Caco-2 (cell line): ENCODE measurements at regions of chr6 and their contacts with region 1.

Region 1: GRCh38 chr6:80338201-80338836 is 231.8 kb downstream of the BCKDHB start:
- DNase-seq: peak; percentile 69 to 82
- H3K4me3 ChIP-seq: no peak overlapping the region
- H3K4me3 Mint-ChIP-seq: no peak overlapping the region
- H3K27ac Mint-ChIP-seq: no peak overlapping the region
- H3K4me1 ChIP-seq: 0 out of 2 replicates have a peak, but pooled peaks cover 4% of the 10 kb centered on the region
- H3K4me1 Mint-ChIP-seq: no peaks in the 10 kb centered on the region
- H3K27me3 ChIP-seq: no peaks in the 10 kb centered on the region
- H3K27me3 Mint-ChIP-seq: no peaks in the 10 kb centered on the region
- CTCF ChIP-seq: peak; percentile 68 to 86

Region 2: GRCh38 chr6:80133020-80133419 is 205.3 kb before region 1 on chr6:
- CTCF ChIA-PET with region 1: no interaction called
- POLR2A ChIA-PET with region 1: no interaction called
- intact Hi-C with region 1: loop called (anchors 10 kb)
- DNase-seq: peak in 1 of 2 experiments; percentile 12
- H3K4me3 ChIP-seq: no peak overlapping the region
- H3K4me3 Mint-ChIP-seq: no peak overlapping the region
- H3K27ac Mint-ChIP-seq: peak overlapping the region; percentile 20
- H3K4me1 ChIP-seq: peaks cover 8% of the 10 kb centered on the region
- H3K4me1 Mint-ChIP-seq: peaks cover 11% of the 10 kb centered on the region
- H3K27me3 ChIP-seq: no peaks in the 10 kb centered on the region
- H3K27me3 Mint-ChIP-seq: no peaks in the 10 kb centered on the region
- CTCF ChIP-seq: peak in 1 of 2 experiments; percentile 10

Region 3: DNA sequence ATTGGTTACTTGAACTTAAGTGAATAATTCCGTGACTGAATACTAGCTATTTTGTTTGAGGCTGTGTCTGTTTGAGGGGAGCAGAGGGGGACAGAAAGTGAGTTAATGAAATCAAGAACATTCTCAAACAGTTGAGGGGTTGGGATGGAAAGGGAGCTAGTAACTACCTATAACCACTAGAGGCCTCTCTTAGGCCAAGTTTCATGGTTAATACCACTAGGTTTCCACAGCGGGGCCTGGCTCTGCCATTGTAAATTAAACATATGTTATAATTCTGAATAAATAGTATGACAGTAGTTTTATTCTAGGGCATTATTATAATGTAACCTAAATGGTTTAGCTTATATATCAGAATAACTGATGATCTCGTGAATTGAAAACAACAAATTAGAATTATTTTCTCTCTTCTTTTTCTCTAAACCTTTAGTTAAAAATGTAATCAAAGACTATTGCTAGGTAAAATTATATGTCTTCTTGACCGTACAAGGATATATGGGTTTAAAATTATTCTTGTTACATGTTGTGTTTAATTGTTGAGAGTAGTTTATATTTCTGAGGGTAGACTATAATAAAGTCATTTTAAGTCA is 123.8 kb before region 1 on chr6:
- CTCF ChIA-PET with region 1: no interaction called
- POLR2A ChIA-PET with region 1: no interaction called
- intact Hi-C with region 1: loop called (anchors 2 kb)
- DNase-seq: peak in 1 of 2 experiments; percentile 33
- H3K4me3 ChIP-seq: no peak overlapping the region
- H3K4me3 Mint-ChIP-seq: no peak overlapping the region
- H3K27ac Mint-ChIP-seq: no peak overlapping the region
- H3K4me1 ChIP-seq: peaks cover 36% of the 10 kb centered on the region
- H3K4me1 Mint-ChIP-seq: peaks cover 25% of the 10 kb centered on the region
- H3K27me3 ChIP-seq: no peaks in the 10 kb centered on the region
- H3K27me3 Mint-ChIP-seq: no peaks in the 10 kb centered on the region
- CTCF ChIP-seq: peak; percentile 71 to 78

Region 4: DNA sequence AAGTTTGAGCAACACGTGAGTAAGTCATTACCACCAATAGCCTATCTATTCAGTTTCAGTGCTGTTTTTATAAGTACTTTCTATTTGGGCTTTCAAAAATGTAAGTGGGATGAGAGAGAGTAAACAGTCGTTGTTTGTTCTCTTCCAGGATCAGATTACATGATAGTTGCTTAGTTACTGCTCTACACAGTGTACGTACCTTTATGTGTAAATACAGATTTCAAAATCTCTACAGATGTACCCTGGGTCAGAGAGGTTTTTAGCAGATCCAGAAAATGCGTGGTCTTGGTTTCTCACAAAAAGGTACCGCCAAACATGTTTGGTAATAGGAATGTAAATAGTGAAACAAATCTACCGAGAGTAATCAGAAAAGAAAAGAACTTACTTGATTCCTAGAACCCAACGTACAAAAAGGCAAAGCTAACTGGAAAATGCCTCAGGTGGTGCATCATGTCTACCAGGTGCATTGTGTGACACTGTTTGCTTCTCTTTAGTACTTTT is 189.3 kb after region 1 on chr6:
- CTCF ChIA-PET with region 1: no interaction called
- POLR2A ChIA-PET with region 1: no interaction called
- intact Hi-C with region 1: loop called (anchors 5 kb)
- DNase-seq: peak in 1 of 2 experiments; percentile 48
- H3K4me3 ChIP-seq: no peak overlapping the region
- H3K4me3 Mint-ChIP-seq: peak overlapping the region; percentile 4
- H3K27ac Mint-ChIP-seq: peak overlapping the region; percentile 8
- H3K4me1 ChIP-seq: peaks cover 19% of the 10 kb centered on the region
- H3K4me1 Mint-ChIP-seq: no peaks in the 10 kb centered on the region
- H3K27me3 ChIP-seq: no peaks in the 10 kb centered on the region
- H3K27me3 Mint-ChIP-seq: no peaks in the 10 kb centered on the region
- CTCF ChIP-seq: no peak

Region 5: DNA sequence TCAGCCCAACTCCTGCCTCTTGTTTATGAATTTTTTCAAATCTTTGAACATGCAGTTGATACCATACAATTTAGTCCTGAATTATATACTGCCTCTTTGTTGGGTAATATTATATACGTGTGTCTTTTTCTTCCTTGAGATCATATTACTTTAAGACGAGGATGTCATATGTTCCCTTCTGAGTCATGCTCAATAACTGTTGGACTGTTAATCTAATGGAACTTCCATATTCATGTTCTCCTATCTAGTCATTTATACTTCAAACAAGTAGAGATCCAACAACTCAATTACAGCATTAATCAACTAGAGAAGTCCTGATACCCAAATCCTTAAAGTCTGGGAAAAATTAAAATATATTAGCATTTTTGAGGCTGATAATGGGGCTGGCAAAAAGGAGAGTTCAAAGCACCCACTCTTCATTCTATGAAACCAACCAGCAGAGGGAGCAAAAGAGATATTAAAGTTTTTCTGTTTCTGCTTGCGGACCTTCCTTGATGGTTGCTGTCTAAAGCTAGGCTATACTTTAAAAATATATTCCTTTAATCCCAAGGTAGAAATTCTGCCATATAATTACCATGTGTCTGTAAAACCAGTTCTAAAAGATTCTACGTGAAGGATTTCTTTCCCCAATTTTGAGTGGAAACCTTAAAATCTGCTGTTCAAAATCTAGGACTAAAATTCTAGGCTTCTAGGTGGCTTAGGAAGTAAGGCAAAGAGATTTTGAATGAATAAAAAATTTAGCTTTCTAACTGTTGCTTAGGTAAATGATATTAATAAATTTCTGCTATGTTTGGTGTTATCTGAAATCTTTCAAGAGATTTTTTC is 267.1 kb after region 1 on chr6:
- CTCF ChIA-PET with region 1: no interaction called
- POLR2A ChIA-PET with region 1: no interaction called
- intact Hi-C with region 1: loop called (anchors 1 kb)
- DNase-seq: peak in 1 of 2 experiments; percentile 39
- H3K4me3 ChIP-seq: no peak overlapping the region
- H3K4me3 Mint-ChIP-seq: no peak overlapping the region
- H3K27ac Mint-ChIP-seq: no peak overlapping the region
- H3K4me1 ChIP-seq: no peaks in the 10 kb centered on the region
- H3K4me1 Mint-ChIP-seq: no peaks in the 10 kb centered on the region
- H3K27me3 ChIP-seq: no peaks in the 10 kb centered on the region
- H3K27me3 Mint-ChIP-seq: peaks cover 13% of the 10 kb centered on the region
- CTCF ChIP-seq: peak; percentile 59 to 64